ENCODE measurements at regions of chr18 and their contacts with region 1.

Region 1: DNA sequence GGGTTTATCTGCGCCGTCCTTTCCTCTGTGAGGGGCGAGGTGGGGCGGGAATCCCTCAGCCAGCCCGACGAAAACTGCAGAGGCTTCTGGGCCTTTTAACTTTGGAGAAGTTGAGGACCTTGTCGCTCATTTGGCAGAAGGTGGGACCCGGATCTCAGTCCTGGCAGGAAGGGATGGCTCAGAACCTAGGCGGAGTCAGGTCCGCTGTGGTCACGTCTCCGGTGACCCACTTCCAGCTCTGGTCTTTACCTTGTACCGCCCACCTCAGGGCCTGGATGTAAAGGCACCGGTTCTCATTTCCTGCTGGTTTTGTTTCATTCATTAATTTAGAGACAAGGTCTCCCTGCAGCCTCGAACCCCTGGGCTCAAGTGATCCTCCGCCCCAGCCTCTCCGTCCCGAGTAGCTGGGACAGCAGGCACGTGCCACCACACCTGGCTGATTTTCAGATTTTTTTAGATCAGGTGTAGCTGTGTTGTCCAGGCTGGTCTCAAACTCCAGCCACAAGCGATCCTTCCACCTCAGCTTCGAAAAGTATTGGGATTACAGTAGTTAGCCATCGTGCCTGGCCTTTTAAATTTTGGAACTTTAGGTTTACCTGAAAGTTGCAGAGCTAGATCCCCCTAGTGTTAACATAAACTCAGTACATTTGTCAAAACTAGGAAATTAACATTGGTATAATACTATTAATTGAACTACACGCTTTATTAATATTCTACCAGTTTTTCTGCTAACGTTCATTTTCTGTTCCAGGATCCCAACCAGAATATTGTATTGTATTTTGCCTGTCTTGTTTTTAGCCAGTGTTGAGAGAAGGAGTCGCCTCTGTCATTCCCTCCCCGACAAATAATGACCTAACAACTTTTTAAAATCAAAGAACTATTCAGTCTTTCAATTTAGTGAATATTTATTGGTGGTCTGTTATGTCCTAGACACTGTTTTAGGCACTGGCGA is 852 bp downstream of the POLI start:
- DNase-seq: peak; percentile 47 to 82 (median 65)
- H3K4me3 ChIP-seq: peak overlapping the region; percentile 54 to 96 (median 76)
- H3K27ac ChIP-seq: peak overlapping the region; percentile 84 to 90
- H3K4me1 ChIP-seq: peaks cover 8 to 21% (median 15%) of the 10 kb centered on the region in 4 experiments
- H3K27me3 ChIP-seq: no peaks in the 10 kb centered on the region

Region 2: GRCh38 chr18:54224379-54225014 is 45.7 kb before region 1 on chr18 and contains the start of gene MBD2:
- CTCF ChIA-PET with region 1: interaction called, 37 read pairs
- POLR2A ChIA-PET with region 1: interaction called, 7 read pairs
- DNase-seq: peak; percentile 95 to 98 (median 98)
- H3K4me3 ChIP-seq: peak within 1 kb of the TSS; percentile 60 to 86 (median 77)
- H3K27ac ChIP-seq: peak within 1 kb of the TSS; percentile 68 to 78
- H3K4me1 ChIP-seq: peaks cover 14 to 24% (median 18%) of the 10 kb centered on the region in 4 experiments
- H3K27me3 ChIP-seq: no peaks in the 10 kb centered on the region

Region 3: DNA sequence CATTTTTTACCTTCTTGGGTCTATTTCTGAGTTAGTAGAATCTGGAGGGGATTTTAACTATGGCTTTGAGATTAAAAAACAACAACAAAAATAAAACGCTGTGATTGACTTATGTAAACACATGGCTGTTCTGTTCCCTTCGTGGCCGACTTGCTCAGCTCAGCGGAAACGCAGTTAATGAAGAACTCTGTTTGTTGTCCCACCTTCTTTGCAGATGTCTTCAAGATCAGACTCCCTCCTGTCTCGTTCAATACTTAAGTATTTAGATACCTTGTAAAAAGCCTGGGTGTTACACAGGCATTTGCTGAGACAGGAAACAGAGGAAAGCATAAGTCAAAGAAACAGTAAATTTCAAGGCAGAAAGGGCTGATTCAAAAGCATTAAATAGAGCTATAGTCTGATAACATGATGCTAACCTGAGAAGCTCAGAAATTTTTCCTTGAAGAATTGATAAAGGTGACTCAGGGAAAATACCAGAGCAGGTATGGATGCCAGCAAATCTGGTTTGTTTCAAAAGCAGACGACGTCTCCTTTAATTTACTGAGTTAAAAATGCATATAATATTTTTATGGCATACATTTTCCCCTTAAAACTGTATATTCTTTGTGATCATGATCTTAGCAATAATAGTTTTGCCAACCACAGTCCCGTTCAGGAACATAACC is 22.5 kb before region 1 on chr18:
- CTCF ChIA-PET with region 1: interaction called, 16 read pairs
- POLR2A ChIA-PET with region 1: interaction called, 5 read pairs
- DNase-seq: no peak
- H3K4me3 ChIP-seq: no peak overlapping the region
- H3K27ac ChIP-seq: no peak overlapping the region
- H3K4me1 ChIP-seq: peaks cover 6 to 9% (median 8%) of the 10 kb centered on the region in 4 experiments
- H3K27me3 ChIP-seq: no peaks in the 10 kb centered on the region

Measured in common myeloid progenitor, CD34-positive (primary cell).